ENCODE measurements at regions of chrX and their contacts with region 1.

Region 1: DNA sequence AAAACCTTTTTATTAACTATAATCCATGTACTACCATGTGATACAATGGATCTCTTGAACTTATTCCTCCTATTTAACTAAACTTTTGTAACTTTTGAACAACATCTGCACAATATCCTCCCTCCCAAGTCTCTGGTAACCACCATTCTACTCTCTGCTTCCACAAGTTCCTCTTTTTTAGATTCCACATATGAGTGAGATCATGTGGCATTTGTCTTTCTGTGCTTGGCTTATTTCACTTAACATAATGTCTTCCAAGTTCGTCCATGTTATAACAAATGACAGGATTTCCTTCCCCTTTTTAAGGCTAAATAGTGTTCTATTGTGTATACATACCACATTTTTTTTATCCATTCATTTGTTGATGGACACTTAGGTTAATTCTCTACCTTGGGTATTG is 28.1 kb downstream of the DCAF8L1 start:
- DNase-seq: no peak

Region 2: GRCh38 chrX:26138274-26138673 is 1814.9 kb before region 1 on chrX and contains the start of gene MAGEB18:
- intact Hi-C with region 1: loop called in 1 of 2 experiments (anchors 10 kb)
- DNase-seq: no peak
- total RNA-seq, gene MAGEB18: not detected

Region 3: DNA sequence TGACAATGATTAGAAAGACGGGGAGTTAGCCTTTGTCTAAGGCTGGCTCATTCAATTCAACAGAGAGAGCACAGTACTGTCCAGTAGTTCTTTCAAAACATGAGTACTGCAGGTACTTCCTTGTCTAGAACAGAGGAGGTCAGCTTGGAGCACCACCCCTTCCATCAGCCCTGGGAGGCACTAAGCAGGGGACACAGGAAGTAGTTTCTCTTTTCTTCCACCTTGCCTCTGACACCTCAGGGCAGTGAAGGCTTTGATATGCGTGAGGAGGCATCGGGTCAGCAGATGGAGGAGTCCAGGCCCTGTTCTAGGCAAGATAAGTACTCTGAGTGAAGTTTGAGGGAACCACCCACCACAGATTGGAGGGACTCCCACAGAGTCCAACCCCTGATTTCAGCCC is 112.3 kb before region 1 on chrX:
- intact Hi-C with region 1: no loop called
- DNase-seq: no peak

Region 4: DNA sequence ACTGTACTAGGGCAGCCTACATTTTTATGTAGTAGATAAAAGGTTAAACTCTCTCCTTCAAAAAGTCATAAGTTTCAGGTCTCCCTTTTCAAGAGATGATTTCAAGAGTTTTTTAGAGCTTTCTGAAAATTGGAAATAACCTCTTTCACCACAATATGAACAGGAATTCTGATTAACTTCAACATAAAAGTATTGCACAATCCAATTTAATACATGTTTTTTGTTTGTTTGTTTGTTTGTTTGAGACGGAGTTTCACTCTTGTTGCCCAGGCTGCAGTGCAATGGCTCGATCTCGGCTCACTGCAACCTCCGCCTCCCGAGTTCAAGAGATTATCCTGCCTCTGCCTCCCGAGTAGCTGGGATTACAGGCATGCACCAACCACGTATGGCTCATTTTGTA is 293.5 kb after region 1 on chrX:
- intact Hi-C with region 1: no loop called
- DNase-seq: no peak

Measured in posterior vena cava (tissue), 2 donors.